ENCODE measurements at regions of chr6 and their contacts with region 1.

Region 1: DNA sequence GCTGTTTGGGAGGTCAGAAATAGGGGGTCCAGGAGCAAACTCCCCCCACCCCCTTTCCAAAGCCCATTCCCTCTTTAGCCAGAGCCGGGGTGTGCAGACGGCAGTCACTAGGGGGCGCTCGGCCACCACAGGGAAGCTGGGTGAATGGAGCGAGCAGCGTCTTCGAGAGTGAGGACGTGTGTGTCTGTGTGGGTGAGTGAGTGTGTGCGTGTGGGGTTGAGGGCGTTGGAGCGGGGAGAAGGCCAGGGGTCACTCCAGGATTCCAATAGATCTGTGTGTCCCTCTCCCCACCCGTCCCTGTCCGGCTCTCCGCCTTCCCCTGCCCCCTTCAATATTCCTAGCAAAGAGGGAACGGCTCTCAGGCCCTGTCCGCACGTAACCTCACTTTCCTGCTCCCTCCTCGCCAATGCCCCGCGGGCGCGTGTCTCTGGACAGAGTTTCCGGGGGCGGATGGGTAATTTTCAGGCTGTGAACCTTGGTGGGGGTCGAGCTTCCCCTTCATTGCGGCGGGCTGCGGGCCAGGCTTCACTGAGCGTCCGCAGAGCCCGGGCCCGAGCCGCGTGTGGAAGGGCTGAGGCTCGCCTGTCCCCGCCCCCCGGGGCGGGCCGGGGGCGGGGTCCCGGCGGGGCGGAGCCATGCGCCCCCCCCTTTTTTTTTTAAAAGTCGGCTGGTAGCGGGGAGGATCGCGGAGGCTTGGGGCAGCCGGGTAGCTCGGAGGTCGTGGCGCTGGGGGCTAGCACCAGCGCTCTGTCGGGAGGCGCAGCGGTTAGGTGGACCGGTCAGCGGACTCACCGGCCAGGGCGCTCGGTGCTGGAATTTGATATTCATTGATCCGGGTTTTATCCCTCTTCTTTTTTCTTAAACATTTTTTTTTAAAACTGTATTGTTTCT is at the start of gene VEGFA:
- DNase-seq: peak; percentile 98
- H3K4me3 ChIP-seq: peak within 1 kb of the TSS; percentile 94 to 95
- H3K27ac ChIP-seq: peak within 1 kb of the TSS; percentile 85 to 94
- H3K4me1 ChIP-seq: peaks cover 16 to 50% of the 10 kb centered on the region in 2 experiments
- H3K27me3 ChIP-seq: no peaks in the 10 kb centered on the region
- CTCF ChIP-seq: peak; percentile 99
- EP300 ChIP-seq: no peak; a peak in 1 of 4 replicates
- RAD21 ChIP-seq: peak; percentile 93
- polyA plus RNA-seq, gene VEGFA: 81.0 and 130 TPM in 2 replicates

Region 2: DNA sequence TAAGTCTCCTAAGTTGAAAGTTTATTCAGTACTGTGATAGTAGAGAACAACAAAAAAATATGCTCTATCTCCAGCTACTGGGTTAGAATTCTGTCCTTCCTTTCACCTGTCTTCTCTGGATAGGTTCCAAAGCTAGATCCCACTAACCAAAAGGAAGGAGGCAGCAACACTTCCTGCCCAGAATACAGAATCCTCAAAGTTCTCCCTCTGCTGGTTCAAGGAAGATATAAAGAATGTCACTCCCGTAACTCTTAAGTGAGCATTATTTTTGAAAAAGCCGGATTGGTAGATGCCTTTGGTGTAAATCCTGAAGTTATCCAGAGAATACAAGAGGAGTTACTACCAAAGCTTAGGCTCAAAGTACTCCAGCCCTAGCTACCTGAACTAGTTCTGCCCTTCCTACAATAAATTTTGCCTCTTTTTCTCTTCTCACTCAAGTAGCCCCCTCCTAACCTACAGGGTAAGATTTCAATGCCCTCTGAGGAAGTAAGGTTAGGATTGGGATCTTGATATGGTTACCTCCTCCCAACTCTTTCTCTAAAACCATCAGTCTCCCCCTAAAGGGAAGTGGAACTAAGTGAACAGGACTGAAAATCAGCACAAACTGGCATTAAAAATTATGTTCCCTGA is 435.2 kb before region 1 on chr6:
- CTCF ChIA-PET with region 1: no interaction called
- POLR2A ChIA-PET with region 1: no interaction called
- DNase-seq: peak; percentile 18
- H3K4me3 ChIP-seq: no peak overlapping the region
- H3K27ac ChIP-seq: no peak overlapping the region
- H3K4me1 ChIP-seq: no peaks in the 10 kb centered on the region
- H3K27me3 ChIP-seq: no peaks in the 10 kb centered on the region
- CTCF ChIP-seq: peak; percentile 65
- EP300 ChIP-seq: no peak
- RAD21 ChIP-seq: peak; percentile 50

Region 3: DNA sequence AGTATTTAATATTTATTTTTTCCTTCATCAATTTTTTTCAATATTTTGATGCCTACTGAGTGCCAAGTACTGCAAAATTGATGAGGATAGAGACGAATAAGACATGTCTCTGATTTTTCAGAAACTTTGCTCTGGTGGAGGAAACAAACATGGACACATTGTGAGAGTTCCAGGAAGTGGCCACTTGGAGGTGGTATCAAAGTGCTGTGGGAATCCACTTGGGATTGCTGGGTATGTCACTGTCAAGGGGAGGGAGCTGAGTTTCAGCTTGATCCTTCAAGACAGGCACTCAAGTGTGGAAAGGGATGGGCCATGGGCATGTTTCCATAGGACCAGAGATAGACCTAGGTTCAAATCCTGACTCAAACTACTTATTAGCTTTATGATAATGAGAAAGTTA is 367.0 kb before region 1 on chr6:
- CTCF ChIA-PET with region 1: no interaction called
- POLR2A ChIA-PET with region 1: no interaction called
- DNase-seq: no peak
- H3K4me3 ChIP-seq: no peak overlapping the region
- H3K27ac ChIP-seq: no peak overlapping the region
- H3K4me1 ChIP-seq: no peaks in the 10 kb centered on the region
- H3K27me3 ChIP-seq: no peaks in the 10 kb centered on the region
- CTCF ChIP-seq: no peak
- EP300 ChIP-seq: no peak
- RAD21 ChIP-seq: no peak

Region 4: DNA sequence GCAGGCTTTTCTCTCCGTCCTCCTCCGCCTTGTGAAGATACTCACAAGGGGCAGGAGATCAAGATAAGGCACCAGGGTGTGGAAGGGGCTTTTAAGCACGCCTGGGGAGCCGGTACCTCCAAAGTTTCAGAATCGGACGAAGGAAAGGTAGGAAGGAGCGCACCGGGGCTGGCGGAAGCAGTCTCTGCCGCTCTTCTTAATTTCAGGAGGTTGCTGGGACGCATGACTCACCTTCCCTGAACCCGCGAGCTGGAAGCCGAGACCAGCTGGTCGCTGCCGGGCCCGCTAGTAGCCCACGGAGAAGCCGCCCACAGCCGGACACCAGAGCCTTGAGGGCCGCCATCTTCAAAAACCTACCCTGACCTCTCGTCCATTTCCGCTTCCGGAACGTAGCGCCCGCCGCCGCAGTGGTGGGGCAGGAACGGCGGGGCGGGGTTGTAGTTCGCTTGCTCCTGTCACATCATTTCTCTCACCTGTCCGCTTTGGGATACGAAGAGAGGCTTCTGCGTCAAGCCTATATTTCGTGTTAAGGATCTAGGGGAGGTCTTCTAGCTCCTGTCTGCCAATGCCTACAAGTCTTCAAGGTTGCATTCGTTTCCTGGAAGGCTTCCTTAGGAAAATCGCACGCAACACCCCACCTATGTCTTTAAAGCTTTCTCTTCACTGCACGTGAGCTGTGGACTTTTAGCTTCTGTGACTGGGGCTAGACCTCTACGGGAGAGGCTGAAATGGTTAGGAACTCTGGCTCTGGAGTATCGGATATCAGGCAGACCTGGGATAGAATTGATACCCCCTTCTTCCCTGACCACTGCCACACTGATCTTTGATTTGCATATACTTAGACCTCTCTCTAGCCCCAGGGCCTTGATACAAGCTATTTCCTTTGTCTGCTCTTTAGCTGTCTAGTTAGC is 82.1 kb before region 1 on chr6 and contains the start of gene MRPS18A:
- CTCF ChIA-PET with region 1: interaction called, 14 read pairs
- POLR2A ChIA-PET with region 1: no interaction called
- DNase-seq: peak; percentile 90
- H3K4me3 ChIP-seq: peak within 1 kb of the TSS; percentile 82 to 98
- H3K27ac ChIP-seq: peak within 1 kb of the TSS; percentile 44 to 67; a peak in 3 of 4 replicates
- H3K4me1 ChIP-seq: peaks cover 0 to 17% of the 10 kb centered on the region in 2 experiments; a peak in 2 of 4 replicates
- H3K27me3 ChIP-seq: no peaks in the 10 kb centered on the region
- CTCF ChIP-seq: no peak
- EP300 ChIP-seq: peak in 1 of 2 experiments; percentile 20; a peak in 1 of 4 replicates
- RAD21 ChIP-seq: no peak
- polyA plus RNA-seq, gene MRPS18A: 56.9 and 57.0 TPM in 2 replicates

Region 5: DNA sequence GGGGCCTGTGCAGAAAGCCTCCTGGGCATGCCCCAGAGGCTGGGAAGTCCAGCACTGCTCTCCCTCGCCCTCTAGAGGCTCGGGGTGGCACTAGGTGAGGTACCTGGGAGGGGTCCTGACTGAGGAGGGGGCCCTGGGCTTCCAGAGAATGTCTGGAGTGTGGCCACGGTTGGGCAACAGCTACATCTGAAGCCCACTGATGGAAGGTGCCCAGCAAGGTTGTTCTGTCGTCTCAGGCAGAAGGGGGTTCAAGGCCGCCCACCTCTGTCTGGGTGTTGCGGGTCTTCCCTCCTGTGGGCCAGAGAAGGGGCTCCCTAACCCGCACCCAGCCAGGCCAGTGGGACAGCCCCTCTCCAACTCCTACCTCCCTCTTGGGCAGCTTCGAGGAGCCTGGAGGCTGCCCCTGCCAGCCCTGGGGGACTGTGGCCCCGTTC is 11.1 kb before region 1 on chr6:
- CTCF ChIA-PET with region 1: interaction called, 30 read pairs
- POLR2A ChIA-PET with region 1: interaction called, 7 read pairs
- DNase-seq: peak; percentile 67
- H3K4me3 ChIP-seq: no peak overlapping the region; a peak in 1 of 4 replicates
- H3K27ac ChIP-seq: no peak overlapping the region
- H3K4me1 ChIP-seq: peaks cover 0 to 12% of the 10 kb centered on the region in 2 experiments; a peak in 1 of 4 replicates
- H3K27me3 ChIP-seq: peaks cover 11% of the 10 kb centered on the region; the same call in 1 of the 2 replicates
- CTCF ChIP-seq: peak; percentile 60
- EP300 ChIP-seq: no peak
- RAD21 ChIP-seq: peak; percentile 50

Region 6: GRCh38 chr6:43856005-43856765 is 86.4 kb after region 1 on chr6:
- CTCF ChIA-PET with region 1: interaction called, 104 read pairs
- POLR2A ChIA-PET with region 1: interaction called, 11 read pairs
- DNase-seq: peak; percentile 74
- H3K4me3 ChIP-seq: no peak overlapping the region
- H3K27ac ChIP-seq: peak overlapping the region in 1 of 2 experiments; percentile 92; a peak in 2 of 4 replicates
- H3K4me1 ChIP-seq: peaks cover 0 to 41% of the 10 kb centered on the region in 2 experiments; a peak in 1 of 4 replicates
- H3K27me3 ChIP-seq: no peaks in the 10 kb centered on the region
- CTCF ChIP-seq: peak; percentile 42
- EP300 ChIP-seq: no peak
- RAD21 ChIP-seq: peak; percentile 74

Region 7: DNA sequence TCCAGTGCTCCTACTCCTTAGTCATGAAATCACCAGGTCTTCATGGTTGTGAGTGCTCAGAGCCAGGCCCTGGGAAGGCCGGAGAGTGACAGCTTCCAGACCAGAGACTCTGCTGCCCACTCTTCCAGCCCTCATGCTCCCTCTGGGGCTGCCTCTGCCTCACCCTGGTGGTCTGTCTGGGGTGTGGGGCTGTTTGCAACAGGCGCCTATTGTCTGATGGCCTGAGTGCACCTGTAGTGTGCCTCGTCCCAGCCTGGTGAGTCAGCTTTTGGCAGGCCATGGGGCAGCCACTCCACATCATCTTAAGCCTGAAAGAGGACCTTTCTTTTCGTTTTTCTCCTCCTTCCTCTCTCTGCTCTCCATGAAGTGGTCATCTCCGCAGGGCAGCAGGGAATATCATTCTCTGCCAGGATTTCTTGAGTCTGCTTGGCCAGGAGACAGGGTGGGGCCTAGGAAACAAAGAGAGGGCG is 174.0 kb after region 1 on chr6:
- CTCF ChIA-PET with region 1: interaction called, 140 read pairs
- POLR2A ChIA-PET with region 1: interaction called, 28 read pairs
- DNase-seq: no peak
- H3K4me3 ChIP-seq: no peak overlapping the region
- H3K27ac ChIP-seq: peak overlapping the region in 1 of 2 experiments; percentile 100; a peak in 2 of 4 replicates
- H3K4me1 ChIP-seq: peaks cover 0 to 51% of the 10 kb centered on the region in 2 experiments; a peak in 3 of 4 replicates
- H3K27me3 ChIP-seq: no peaks in the 10 kb centered on the region
- CTCF ChIP-seq: no peak
- EP300 ChIP-seq: no peak
- RAD21 ChIP-seq: no peak

Region 8: DNA sequence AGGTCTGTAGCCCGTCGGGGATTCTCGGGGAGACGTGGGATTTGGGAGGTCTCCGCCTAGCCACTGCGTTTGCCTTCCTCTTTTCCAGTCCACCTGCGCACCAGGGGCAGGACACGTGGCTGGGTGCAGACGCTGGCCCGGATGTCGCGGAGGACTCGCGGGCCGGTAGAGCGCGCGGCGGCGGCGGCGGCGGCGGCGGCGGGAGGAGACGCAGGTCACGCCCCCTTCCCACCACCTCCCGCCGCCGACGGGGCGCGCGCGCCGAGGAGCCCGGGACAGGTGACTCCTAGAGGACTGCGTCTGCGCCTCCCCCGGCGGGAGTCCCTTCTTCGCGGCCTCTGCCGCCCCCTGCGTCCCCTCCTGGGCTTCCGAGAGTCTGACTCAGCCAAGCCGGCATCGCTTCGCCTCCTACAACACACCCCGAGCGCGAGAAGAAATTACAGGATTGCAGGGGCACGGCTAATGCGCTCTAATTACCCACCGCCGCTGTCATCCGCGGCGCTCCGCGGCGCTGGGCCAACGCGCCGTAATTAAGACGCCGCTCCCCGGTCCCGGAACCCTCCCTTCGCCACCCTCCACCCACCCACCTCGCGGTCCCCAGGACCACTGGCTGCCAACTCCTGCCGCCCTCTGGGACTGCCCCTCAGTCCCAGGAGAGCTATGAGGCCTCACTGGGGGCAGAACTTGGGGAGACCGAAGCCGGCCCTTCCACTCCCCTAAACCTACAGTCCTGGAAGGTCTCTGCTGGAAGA is 233.0 kb after region 1 on chr6:
- CTCF ChIA-PET with region 1: interaction called, 10 read pairs
- POLR2A ChIA-PET with region 1: no interaction called
- DNase-seq: peak; percentile 72
- H3K4me3 ChIP-seq: no peak overlapping the region
- H3K27ac ChIP-seq: no peak overlapping the region
- H3K4me1 ChIP-seq: peaks cover 11 to 39% of the 10 kb centered on the region in 2 experiments; a peak in 3 of 4 replicates
- H3K27me3 ChIP-seq: no peaks in the 10 kb centered on the region
- CTCF ChIP-seq: no peak
- EP300 ChIP-seq: no peak
- RAD21 ChIP-seq: no peak

Region 9: DNA sequence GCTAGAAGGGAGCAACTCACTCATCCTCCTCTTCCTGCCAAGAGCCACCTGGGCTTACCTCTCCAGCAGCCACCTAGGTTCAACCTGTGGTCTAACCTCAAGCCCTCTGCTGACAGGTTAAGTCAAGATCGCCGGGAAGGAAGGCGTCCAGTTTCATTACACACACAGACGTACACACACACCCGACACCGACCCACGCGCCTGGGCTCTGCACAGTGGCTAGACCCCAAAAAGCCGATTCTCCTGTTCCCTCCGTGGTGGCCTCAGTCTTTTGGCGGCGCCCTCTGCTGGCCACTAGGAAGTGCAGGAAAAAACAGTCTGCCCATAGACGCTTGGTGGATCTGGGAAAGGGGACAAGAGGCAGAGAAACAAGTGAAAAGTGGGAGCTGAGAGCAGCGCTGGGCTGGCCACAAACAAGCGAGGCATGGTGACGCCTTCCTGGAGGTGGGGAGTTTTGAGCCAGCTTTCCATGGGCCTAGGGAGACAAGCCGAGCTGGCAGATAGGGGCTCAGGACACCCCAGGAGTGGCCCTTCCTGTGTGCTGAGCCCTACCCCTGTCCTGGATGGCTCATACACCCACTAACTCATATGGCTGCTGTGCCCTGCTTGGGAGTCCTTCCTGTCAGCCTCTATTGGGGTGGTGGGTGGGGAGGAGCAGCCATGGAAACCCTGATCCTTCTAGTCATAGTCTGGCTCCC is 304.8 kb after region 1 on chr6:
- CTCF ChIA-PET with region 1: interaction called, 212 read pairs
- POLR2A ChIA-PET with region 1: interaction called, 53 read pairs
- DNase-seq: peak; percentile 83
- H3K4me3 ChIP-seq: peak overlapping the region in 1 of 2 experiments; percentile 16; a peak in 1 of 4 replicates
- H3K27ac ChIP-seq: peak overlapping the region in 1 of 2 experiments; percentile 99; a peak in 2 of 4 replicates
- H3K4me1 ChIP-seq: peaks cover 35 to 70% of the 10 kb centered on the region in 2 experiments
- H3K27me3 ChIP-seq: no peaks in the 10 kb centered on the region
- CTCF ChIP-seq: peak; percentile 91
- EP300 ChIP-seq: peak in 1 of 2 experiments; percentile 8; a peak in 1 of 4 replicates
- RAD21 ChIP-seq: peak; percentile 88